ENCODE measurements at regions of chr4 and their contacts with region 1.

Region 1: DNA sequence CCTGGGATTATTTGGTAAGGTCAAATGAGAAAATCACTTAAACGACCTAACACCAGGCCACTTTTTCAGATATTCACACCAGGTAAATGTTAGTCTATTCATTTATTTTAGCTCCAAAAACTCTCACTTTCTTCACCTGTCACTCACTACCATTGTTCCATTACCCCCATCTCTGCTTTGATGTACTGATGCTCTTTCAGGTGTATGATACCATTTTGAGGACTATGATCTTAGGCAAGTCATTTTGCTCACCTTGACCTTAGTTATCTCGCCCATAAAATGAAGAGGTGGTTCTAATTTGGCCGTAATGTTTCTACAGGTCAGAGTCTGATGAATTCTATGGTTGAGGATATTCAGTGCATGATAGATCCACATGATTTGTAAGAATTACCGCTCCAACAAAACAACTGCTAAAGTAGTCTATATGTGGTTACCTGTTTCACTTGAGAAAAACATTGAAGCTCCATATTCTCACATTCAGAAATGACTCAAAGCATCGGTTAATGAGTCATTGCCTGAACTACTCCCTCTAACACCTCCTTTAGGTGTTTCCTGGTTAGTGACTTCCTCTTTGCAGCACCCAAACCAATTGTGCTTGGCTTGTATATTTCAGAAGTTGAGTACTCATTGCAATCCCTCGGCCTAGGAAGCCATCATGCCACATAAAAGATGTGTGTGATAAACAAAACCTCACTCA is 4.5 kb downstream of the DTHD1 start:
- DNase-seq: peak; percentile 92
- H3K4me3 Mint-ChIP-seq: peak overlapping the region; percentile 75
- H3K27ac Mint-ChIP-seq: peak overlapping the region; percentile 96
- H3K4me1 Mint-ChIP-seq: peaks cover 65% of the 10 kb centered on the region
- H3K27me3 Mint-ChIP-seq: peaks cover 3% of the 10 kb centered on the region

Region 2: DNA sequence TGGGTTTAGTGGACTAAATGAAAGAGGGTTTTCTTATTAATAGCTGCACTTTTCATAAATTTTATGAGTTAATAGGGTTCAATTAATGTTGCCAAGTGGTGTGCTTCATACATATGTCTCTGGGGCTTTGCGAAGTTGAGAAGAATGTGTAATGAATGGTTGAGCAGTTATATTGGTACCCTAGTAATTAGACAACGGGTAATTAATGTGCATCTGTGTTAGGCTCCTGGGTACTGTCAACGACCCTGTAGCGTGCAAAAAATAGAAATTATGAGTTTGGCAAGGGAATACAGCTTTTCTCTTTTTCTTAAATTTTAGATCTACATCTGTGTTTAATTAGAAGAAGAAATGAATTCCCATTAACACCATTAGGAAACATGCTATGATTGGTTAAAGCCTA is 1069.3 kb before region 1 on chr4:
- intact Hi-C with region 1: no loop called
- DNase-seq: no peak
- H3K4me3 Mint-ChIP-seq: no peak overlapping the region
- H3K27ac Mint-ChIP-seq: no peak overlapping the region
- H3K4me1 Mint-ChIP-seq: no peaks in the 10 kb centered on the region
- H3K27me3 Mint-ChIP-seq: no peaks in the 10 kb centered on the region

Region 3: DNA sequence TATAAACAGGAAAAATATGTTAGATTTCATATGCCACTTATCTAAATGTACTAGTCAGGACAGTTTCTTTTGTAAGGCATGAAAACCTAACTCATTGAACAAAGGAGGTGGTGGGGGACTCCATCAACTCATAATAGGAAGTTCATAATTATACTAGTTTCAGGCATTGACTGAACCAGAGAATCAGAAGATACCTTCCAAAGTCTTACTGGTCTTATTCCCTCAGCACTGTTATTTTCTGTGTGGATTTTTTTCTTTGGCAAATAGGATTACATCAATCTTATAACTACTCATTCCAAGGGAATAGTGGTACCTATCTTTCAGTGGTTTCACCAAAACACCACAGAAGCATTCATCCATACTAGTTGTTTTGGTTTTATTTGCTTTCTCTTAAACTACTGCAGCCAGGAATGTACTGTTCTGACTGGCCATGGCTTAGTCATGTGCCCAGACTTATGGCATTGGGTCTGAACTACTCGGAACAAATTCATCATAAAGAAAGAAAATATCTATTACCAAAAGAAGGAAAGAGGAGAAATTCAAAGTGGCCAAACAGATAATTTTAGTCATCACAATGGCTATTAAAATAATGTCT is 315.5 kb before region 1 on chr4:
- intact Hi-C with region 1: loop called (anchors 10 kb)
- DNase-seq: no peak
- H3K4me3 Mint-ChIP-seq: no peak overlapping the region
- H3K27ac Mint-ChIP-seq: no peak overlapping the region
- H3K4me1 Mint-ChIP-seq: peaks cover 10% of the 10 kb centered on the region
- H3K27me3 Mint-ChIP-seq: no peaks in the 10 kb centered on the region

Region 4: GRCh38 chr4:36187723-36188333 is 98.1 kb before region 1 on chr4:
- intact Hi-C with region 1: no loop called
- DNase-seq: no peak
- H3K4me3 Mint-ChIP-seq: no peak overlapping the region
- H3K27ac Mint-ChIP-seq: no peak overlapping the region
- H3K4me1 Mint-ChIP-seq: peaks cover 26% of the 10 kb centered on the region
- H3K27me3 Mint-ChIP-seq: no peaks in the 10 kb centered on the region

Region 5: GRCh38 chr4:36230534-36230933 is 55.4 kb before region 1 on chr4:
- intact Hi-C with region 1: no loop called
- DNase-seq: no peak
- H3K4me3 Mint-ChIP-seq: no peak overlapping the region
- H3K27ac Mint-ChIP-seq: peak overlapping the region; percentile 12
- H3K4me1 Mint-ChIP-seq: peaks cover 43% of the 10 kb centered on the region
- H3K27me3 Mint-ChIP-seq: no peaks in the 10 kb centered on the region

Region 6: GRCh38 chr4:36244257-36245079 is 41.5 kb before region 1 on chr4 and contains the start of gene ARAP2:
- intact Hi-C with region 1: loop called (anchors 1 kb)
- DNase-seq: peak; percentile 93
- H3K4me3 Mint-ChIP-seq: peak within 1 kb of the TSS; percentile 87
- H3K27ac Mint-ChIP-seq: peak within 1 kb of the TSS; percentile 96
- H3K4me1 Mint-ChIP-seq: peaks cover 38% of the 10 kb centered on the region
- H3K27me3 Mint-ChIP-seq: peaks cover 7% of the 10 kb centered on the region
- total RNA-seq, gene ARAP2: 45.3 and 45.4 TPM in 2 replicates

Region 7: GRCh38 chr4:36269101-36269500 is 16.8 kb before region 1 on chr4:
- intact Hi-C with region 1: loop called (anchors 1 kb)
- DNase-seq: peak; percentile 83
- H3K4me3 Mint-ChIP-seq: no peak overlapping the region
- H3K27ac Mint-ChIP-seq: peak overlapping the region; percentile 54
- H3K4me1 Mint-ChIP-seq: peaks cover 43% of the 10 kb centered on the region
- H3K27me3 Mint-ChIP-seq: no peaks in the 10 kb centered on the region

Region 8: DNA sequence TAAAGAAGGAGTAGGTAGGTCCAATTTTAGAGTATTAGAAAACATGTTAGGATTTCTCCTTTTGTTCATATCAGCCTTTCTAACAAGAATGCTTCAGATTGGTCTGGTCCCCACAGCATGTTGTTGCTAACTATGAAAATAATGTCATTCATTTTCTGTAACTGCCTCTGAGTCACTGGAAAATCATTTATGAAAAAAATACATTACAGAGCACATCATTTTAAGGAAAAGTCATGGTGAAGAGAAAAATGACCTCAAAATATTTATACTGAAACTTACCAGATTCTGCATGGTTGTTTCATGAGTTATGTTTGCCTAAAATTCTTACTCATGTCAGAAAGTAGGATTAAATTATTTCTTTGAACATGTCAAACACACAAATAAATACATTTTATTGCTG is 30.7 kb after region 1 on chr4:
- intact Hi-C with region 1: loop called (anchors 1 kb)
- DNase-seq: no peak
- H3K4me3 Mint-ChIP-seq: no peak overlapping the region
- H3K27ac Mint-ChIP-seq: peak overlapping the region; percentile 67
- H3K4me1 Mint-ChIP-seq: peaks cover 48% of the 10 kb centered on the region
- H3K27me3 Mint-ChIP-seq: no peaks in the 10 kb centered on the region

Region 9: DNA sequence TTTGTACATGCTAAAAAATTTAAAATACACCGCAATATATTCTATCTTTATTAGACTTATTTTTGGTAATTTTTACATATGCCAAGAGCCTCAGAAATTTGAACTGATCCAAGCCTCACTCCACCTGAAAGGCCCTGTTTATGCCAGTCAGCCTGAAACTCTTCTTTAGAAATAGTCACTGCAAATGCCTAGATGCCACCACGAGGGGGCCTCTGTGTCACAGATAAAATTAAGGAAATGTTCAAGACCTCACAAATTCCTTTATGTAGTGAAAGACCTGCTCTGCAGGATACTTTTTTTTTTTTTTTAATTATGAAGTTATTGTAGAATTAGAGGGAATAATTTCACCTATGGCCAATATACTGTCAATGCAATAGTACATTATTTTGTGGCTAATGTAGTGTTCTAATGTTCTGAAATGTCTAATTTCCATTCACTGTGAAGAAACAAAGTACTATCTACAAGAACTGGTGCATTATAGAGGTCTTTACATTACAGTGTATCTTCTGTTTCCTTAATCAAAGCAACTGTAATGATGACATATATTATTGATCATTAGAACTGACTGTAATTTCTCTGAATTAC is 65.2 kb after region 1 on chr4:
- intact Hi-C with region 1: loop called (anchors 1 kb)
- DNase-seq: peak; percentile 92
- H3K4me3 Mint-ChIP-seq: no peak overlapping the region
- H3K27ac Mint-ChIP-seq: no peak overlapping the region
- H3K4me1 Mint-ChIP-seq: peaks cover 34% of the 10 kb centered on the region
- H3K27me3 Mint-ChIP-seq: peaks cover 6% of the 10 kb centered on the region

Region 10: GRCh38 chr4:36399762-36400353 is 113.9 kb after region 1 on chr4:
- intact Hi-C with region 1: loop called (anchors 1 kb)
- DNase-seq: peak; percentile 86
- H3K4me3 Mint-ChIP-seq: no peak overlapping the region
- H3K27ac Mint-ChIP-seq: no peak overlapping the region
- H3K4me1 Mint-ChIP-seq: peaks cover 21% of the 10 kb centered on the region
- H3K27me3 Mint-ChIP-seq: peaks cover 10% of the 10 kb centered on the region

Region 11: GRCh38 chr4:36432586-36432985 is 146.7 kb after region 1 on chr4:
- intact Hi-C with region 1: no loop called
- DNase-seq: no peak
- H3K4me3 Mint-ChIP-seq: no peak overlapping the region
- H3K27ac Mint-ChIP-seq: no peak overlapping the region
- H3K4me1 Mint-ChIP-seq: no peaks in the 10 kb centered on the region
- H3K27me3 Mint-ChIP-seq: peaks cover 13% of the 10 kb centered on the region

Measured in activated CD4-positive, alpha-beta T cell treated with anti-CD3 and anti-CD28 coated beads, Interleukin-2, amount 10 ng/mL, durations not matched to agents 24 days and 14 days (primary cell).